HAP-1 (cell line): ENCODE measurements at regions of chr1 and their contacts with region 1.

Region 1: GRCh38 chr1:109263597-109264398 is 14.5 kb downstream of the CELSR2 start:
- DNase-seq: peak; percentile 60 to 91
- H3K4me3 ChIP-seq: no peak overlapping the region
- H3K4me1 ChIP-seq: no peaks in the 10 kb centered on the region
- H3K27me3 ChIP-seq: no peaks in the 10 kb centered on the region

Region 2: DNA sequence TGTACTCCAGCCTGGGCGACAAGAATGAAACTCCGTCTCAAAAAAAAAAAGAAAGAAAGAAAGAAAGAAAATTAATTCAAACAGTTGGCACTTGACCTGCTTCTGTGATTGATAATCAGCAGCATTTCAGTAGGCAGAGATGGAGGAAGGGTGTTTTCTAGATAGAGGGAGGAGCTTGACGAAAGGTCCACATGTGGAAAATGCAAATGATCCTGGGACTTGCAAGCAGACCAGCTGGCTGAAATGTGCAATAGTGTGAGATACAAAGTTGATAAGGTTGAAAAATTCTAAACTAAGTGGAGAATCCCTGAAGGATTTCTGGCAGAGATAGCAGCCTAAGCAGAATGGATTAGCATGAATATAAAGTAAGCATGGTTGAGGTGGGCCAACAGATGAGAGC is 145.7 kb before region 1 on chr1:
- in situ Hi-C with region 1: no loop called
- DNase-seq: no peak
- H3K4me3 ChIP-seq: no peak overlapping the region
- H3K4me1 ChIP-seq: 0 out of 2 replicates have a peak, but pooled peaks cover under 1% of the 10 kb centered on the region
- H3K27me3 ChIP-seq: peaks cover 4% of the 10 kb centered on the region; the same call in 1 of the 2 replicates

Region 3: DNA sequence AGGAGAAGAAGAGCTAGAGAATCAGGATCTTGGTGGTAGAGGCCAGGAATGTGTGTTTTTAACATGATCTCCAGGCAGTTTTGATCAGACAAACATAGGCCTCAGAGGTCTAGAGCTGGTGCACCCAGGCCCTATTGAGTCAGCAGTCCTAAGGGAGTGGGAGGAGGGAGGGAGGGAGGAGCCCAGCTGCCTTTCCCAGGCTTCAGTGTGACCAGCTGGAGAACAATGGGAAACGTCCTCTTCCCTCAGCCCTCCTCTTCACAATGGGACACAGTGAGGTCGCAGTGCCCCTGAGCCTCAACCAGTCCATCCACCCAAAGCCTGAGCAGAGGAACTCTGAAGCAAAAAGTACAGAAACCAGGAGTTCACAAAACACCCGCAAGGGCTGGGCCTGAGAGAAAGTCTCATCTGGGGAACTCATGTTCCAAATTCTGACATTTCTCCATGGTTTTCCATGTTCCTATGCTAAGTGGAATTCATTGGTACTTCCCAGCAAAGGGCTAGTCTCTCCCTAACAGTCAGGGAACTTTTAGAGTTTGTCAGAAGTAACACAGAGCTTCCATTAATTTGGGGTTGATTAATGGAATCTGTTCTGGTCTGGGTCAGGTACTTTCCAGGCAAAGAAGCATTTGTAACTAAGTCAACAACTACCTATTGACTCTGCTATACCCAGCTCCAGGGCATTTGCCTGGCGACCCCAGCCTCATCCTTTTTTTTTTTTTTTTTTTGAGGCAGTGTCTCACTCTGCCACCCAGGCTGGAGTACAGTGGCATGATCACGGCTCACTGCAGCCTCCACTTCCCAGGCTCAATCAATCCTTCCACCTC is 112.4 kb before region 1 on chr1:
- in situ Hi-C with region 1: no loop called
- DNase-seq: peak; percentile 27 to 66
- H3K4me3 ChIP-seq: no peak overlapping the region
- H3K4me1 ChIP-seq: peaks cover 12% of the 10 kb centered on the region
- H3K27me3 ChIP-seq: no peaks in the 10 kb centered on the region

Region 4: GRCh38 chr1:109404838-109405237 is 141.0 kb after region 1 on chr1:
- in situ Hi-C with region 1: loop called (anchors 5 kb)
- DNase-seq: no peak
- H3K4me3 ChIP-seq: no peak overlapping the region
- H3K4me1 ChIP-seq: no peaks in the 10 kb centered on the region
- H3K27me3 ChIP-seq: no peaks in the 10 kb centered on the region

Region 5: GRCh38 chr1:109704173-109704572 is 440.4 kb after region 1 on chr1:
- in situ Hi-C with region 1: no loop called
- DNase-seq: no peak
- H3K4me3 ChIP-seq: no peak overlapping the region
- H3K4me1 ChIP-seq: no peaks in the 10 kb centered on the region
- H3K27me3 ChIP-seq: no peaks in the 10 kb centered on the region